Activated CD4-positive, alpha-beta T cell treated with anti-CD3 and anti-CD28 coated beads, Interleukin-2, amount 10 ng/mL, durations not matched to agents 24 days and 14 days (primary cell): ENCODE measurements at regions of chr2 and their contacts with region 1.

Region 1: DNA sequence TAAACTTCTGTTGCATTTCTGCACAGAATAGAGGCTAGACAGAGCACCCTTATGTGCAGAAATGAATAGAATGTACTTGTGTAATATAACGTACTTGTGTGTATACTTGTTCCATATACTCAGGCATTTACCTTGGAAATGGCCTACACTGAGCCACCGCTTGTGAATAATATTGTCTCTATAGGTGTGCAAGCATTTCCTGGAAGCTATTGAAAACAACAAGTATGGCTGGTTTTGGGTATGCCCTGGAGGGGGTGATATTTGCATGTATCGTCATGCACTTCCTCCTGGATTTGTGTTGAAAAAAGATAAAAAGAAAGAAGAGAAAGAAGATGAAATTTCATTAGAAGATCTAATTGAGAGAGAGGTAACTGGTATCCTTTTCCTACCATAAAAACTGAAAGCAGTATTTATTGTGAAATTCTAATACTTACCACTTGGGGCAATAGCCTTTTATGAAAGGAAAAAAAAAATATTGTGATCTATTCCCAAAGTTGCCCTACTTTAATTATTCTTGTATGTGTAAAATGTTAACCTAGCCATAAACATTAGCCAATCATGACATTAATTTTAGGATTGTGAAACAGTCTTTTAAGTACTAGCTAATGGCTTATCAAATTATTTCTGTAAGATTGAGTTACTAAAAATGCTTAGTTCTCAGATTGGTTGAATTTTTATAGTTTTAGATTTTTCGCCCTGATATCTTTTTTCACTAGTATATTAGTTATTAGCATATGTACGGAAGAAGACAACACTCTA is 18.0 kb downstream of the ZC3H15 start:
- DNase-seq: no peak
- H3K4me3 Mint-ChIP-seq: no peak overlapping the region
- H3K27ac Mint-ChIP-seq: no peak overlapping the region
- H3K4me1 Mint-ChIP-seq: peaks cover 15% of the 10 kb centered on the region
- H3K27me3 Mint-ChIP-seq: no peaks in the 10 kb centered on the region

Region 2: GRCh38 chr2:186485871-186486650 is 18.0 kb before region 1 on chr2 and contains the start of gene ZC3H15:
- intact Hi-C with region 1: loop called (anchors 1 kb)
- DNase-seq: peak; percentile 99
- H3K4me3 Mint-ChIP-seq: peak within 1 kb of the TSS; percentile 95
- H3K27ac Mint-ChIP-seq: peak within 1 kb of the TSS; percentile 99
- H3K4me1 Mint-ChIP-seq: peaks cover 48% of the 10 kb centered on the region
- H3K27me3 Mint-ChIP-seq: no peaks in the 10 kb centered on the region
- total RNA-seq, gene ZC3H15: 103 and 106 TPM in 2 replicates

Region 3: DNA sequence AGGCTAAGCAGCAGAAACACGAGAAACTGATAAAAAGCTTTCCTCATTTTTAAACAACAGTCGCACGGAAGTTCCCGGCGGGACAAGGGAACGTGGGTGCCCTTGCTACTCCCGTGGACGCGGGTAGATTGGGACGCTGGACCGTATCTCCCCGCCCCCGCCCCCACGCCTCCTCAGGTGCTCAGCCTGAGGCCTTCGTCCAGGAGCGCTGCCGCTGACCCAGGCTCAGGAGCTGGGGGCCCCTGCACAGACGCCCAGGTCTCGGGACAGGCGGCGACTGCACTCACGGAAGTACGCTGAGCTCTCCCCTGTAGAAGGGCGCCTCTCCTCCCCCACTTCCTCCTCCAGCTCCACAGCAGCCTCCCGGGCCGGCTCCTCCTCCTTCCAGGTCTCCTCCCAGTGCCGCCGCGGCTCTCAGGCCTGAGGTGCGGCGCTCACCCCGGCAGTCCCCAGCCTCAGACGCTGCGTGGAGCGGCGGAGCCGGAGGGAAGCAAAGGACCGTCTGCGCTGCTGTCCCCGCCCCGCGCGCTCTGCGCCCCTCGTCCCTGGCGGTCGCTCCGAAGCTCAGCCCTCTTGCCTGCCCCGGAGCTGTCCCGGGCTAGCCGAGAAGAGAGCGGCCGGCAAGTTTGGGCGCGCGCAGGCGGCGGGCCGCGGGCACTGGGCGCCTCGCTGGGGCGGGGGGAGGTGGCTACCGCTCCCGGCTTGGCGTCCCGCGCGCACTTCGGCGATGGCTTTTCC is 85.8 kb after region 1 on chr2 and contains the start of gene ITGAV:
- intact Hi-C with region 1: loop called (anchors 5 kb)
- DNase-seq: peak; percentile 95
- H3K4me3 Mint-ChIP-seq: peak within 1 kb of the TSS; percentile 85
- H3K27ac Mint-ChIP-seq: peak within 1 kb of the TSS; percentile 80
- H3K4me1 Mint-ChIP-seq: peaks cover 19% of the 10 kb centered on the region
- H3K27me3 Mint-ChIP-seq: peaks cover 9% of the 10 kb centered on the region
- total RNA-seq, gene ITGAV: 6.9 and 8.1 TPM in 2 replicates

Region 4: DNA sequence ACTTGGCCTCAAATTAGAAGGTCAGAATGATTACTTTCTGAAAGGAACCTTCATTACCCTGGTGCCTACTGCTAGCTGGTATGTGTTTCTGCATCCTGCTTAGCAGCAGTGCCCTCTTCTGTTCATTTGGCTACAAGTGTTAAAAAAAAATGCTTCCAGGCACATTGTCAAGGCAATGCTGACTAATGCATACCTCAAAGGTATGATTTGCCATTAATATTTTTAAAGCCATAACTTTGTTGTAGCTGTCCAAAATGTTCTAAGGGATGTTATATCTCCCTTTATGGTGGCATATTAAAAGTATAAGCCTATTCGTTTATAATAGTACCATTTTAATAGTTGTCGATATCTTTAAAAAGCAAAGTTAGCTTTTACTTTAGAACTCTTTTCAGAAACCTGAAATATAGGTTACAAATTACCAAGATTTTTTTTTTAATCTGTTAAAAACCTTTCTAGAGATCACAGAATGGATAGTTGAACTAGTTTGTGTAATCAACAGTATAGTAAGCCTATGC is 137.8 kb after region 1 on chr2:
- intact Hi-C with region 1: loop called (anchors 1 kb)
- DNase-seq: peak; percentile 81
- H3K4me3 Mint-ChIP-seq: no peak overlapping the region
- H3K27ac Mint-ChIP-seq: no peak overlapping the region
- H3K4me1 Mint-ChIP-seq: peaks cover 24% of the 10 kb centered on the region
- H3K27me3 Mint-ChIP-seq: no peaks in the 10 kb centered on the region

Region 5: DNA sequence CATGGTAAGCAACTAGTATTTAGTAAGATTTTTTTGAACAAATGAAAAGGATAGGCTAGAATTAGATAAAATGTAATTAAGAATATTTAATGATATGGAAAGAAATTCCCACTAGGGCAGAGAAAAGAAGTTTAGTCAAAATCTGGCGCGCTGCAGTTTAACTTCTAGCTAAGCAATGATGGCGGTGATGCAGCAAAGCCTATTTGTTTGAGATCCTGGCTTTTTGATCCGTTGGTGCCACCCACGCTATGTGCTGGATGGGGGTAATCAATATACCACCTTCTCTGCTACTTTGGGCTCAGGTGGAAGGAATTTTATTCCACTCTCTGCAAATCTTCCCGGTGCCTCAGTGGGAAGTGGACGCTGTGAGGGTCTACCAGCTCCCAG is 189.4 kb after region 1 on chr2:
- intact Hi-C with region 1: loop called (anchors 5 kb)
- DNase-seq: no peak
- H3K4me3 Mint-ChIP-seq: peak overlapping the region; percentile 82
- H3K27ac Mint-ChIP-seq: no peak overlapping the region
- H3K4me1 Mint-ChIP-seq: peaks cover 12% of the 10 kb centered on the region
- H3K27me3 Mint-ChIP-seq: peaks cover 42% of the 10 kb centered on the region